H1 (cell line): ENCODE measurements at regions of chr19 and their contacts with region 1.

Region 1: DNA sequence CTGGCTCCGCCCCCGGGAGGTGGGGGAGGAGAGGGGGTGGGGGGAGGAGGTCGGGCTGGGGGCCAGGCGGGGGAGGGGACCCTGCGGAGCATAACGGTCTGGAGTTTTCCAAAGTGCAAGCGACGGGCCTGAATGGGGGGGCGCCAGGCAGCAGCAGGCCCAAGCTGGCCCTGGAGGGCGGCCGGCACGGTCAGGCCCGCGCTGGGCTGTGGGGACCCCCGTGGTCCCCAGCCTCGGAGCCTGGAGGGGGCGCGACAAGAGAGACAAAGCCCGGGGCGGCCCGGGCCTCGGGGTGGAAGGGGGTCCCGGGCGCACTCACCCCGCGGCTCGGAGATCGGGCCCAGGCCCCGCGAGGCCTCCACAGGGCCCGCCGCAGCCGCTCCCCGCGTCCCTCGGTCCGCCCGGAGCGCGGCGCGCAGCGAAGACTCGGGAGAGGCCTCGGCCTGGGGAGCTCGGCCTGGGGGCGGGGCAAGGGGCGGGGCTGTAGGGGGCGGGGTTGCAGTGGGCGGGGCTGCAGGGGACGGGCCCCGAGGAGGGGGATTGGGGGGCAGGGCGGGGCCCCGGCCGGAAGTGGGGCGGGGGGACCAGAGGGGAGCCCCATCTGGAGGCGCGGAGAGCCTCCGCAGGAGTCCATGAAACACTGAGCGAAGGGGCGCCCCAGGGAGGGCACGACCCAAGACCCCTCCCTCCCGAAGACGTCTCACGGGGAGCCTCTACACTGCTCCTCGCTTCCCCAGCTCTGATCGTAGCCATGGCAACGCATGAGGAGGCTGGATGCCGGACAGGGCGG is 47.6 kb downstream of the PTPRS start:
- DNase-seq: peak in 1 of 2 experiments; percentile 51
- H3K4me3 ChIP-seq: peak overlapping the region; percentile 44 to 96 (median 79)
- H3K27ac ChIP-seq: peak overlapping the region; percentile 72; the same call in 1 of the 2 replicates
- H3K4me1 ChIP-seq: peaks cover 0 to 27% (median 18%) of the 10 kb centered on the region in 4 experiments; a peak in 6 of 7 replicates
- H3K27me3 ChIP-seq: no peaks in the 10 kb centered on the region
- CTCF ChIP-seq: no peak
- EP300 ChIP-seq: no peak
- POLR2A ChIP-seq: peak in 1 of 2 experiments; percentile 56; a peak in 2 of 3 replicates
- RAD21 ChIP-seq: no peak

Region 2: DNA sequence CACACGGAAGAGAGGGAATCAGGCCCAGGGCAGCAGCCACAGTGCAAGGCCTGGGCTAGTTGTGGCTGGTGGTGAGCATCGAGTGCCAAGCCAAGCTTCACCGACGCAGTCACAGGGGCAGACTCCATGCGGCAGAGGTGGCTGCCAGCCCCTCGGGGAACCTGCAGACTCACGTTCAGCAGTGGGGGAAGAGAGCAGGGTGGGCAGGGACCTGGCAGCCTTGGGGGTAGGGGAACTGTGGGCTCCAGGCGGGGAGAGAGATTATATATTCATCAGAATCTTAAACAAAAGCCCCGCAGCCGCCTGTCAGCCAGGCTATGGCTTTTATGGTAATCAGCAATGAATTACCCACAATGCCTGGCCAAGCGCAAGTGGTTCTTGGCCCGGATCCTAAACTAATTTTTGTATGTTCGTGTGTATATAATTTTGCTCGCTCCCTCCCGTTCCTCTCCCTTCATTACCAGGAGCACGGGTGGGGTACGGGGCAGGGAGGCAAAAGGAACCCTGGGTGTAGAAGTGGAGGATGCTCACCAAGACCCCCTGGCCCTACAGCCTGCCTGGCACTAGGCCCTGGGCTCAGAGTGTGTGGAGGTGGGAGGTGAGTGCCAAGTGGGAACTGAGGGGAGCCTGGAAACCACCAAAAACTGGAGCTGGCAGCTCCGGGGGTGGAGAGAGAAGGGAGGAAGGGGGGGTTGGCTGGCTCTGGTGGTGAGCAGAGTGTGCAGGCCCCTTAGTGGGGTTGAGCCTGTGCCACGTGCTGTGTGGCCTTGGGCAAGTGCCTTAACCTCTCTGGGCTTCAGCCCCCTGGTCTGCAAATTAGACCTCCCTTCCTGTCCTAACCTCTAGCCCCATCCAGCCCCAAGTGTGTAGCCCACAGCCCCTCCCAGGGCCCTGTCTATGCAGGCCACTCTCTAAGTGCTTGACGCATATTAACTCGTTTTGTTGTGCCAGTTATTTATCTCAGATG is 15.7 kb after region 1 on chr19:
- CTCF ChIA-PET with region 1: interaction called, 3 read pairs
- POLR2A ChIA-PET with region 1: interaction called, 10 read pairs
- DNase-seq: no peak
- H3K4me3 ChIP-seq: no peak overlapping the region
- H3K27ac ChIP-seq: no peak overlapping the region
- H3K4me1 ChIP-seq: peaks cover 2 to 5% (median 3%) of the 10 kb centered on the region in 4 experiments; a peak in 4 of 7 replicates
- H3K27me3 ChIP-seq: no peaks in the 10 kb centered on the region
- CTCF ChIP-seq: no peak
- EP300 ChIP-seq: no peak
- POLR2A ChIP-seq: peak; percentile 58 to 97
- RAD21 ChIP-seq: no peak

Region 3: DNA sequence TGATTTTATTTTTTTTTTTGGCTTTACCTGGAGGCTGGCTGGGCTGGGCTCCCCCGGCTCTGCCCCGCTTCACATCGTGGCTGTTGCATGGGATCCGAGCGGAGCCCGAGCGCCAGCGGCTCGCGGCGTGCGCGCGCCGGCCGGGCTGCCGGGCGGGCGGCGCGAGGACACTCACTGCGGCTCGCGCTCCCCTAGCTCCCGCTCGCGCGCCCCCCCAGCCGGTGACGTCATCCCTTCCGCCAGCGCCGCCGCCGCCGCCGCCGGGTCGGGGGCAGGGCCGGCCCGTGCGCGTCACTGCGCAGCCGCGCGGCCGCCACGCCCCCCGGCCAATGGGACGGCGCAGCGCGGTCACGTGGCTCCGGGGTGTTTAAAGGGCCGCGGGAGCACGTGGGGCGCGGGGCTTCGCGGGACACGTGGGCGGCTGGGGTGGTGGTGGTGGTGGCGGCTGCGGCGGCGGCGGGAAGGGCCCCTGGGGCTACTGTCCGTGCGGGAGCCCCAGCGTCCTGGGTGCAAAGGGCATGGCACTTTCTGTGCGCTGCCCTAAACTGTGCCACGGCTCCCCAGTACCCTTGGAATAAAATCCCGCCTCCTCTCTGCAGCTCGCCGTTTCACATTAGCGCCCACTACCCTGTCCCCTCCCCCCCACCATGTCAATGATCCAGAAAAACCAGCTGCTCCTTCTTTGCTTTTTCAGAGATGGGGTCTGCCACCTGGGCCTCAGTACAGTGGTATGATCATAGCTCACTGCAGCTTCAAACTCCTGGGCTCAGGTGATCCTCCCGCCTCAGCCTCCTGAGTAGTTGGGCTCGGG is 47.8 kb after region 1 on chr19 and contains the start of gene PTPRS:
- CTCF ChIA-PET with region 1: no interaction called
- POLR2A ChIA-PET with region 1: interaction called, 24 read pairs
- DNase-seq: peak; percentile 33 to 97
- H3K4me3 ChIP-seq: peak within 1 kb of the TSS; percentile 54 to 98 (median 76)
- H3K27ac ChIP-seq: peak within 1 kb of the TSS; percentile 73; the same call in 1 of the 2 replicates
- H3K4me1 ChIP-seq: peaks cover 2 to 21% (median 12%) of the 10 kb centered on the region in 4 experiments
- H3K27me3 ChIP-seq: peaks cover 10 to 18% (median 15%) of the 10 kb centered on the region in 4 experiments
- CTCF ChIP-seq: no peak
- EP300 ChIP-seq: no peak
- POLR2A ChIP-seq: peak; percentile 31 to 62
- RAD21 ChIP-seq: no peak
- total RNA-seq, gene PTPRS: 218 and 223 TPM in 2 replicates